Left lung (tissue), 14 donors: ENCODE measurements at regions of chr15 and their contacts with region 1.

Region 1: GRCh38 chr15:92808978-92809879 is 90.9 kb upstream of the CHD2 start:
- DNase-seq: peak; percentile 99 to 100 (median 99)
- ATAC-seq: peak; percentile 80
- H3K4me3 ChIP-seq: peak overlapping the region; percentile 42 to 59
- H3K27ac ChIP-seq: peak overlapping the region; percentile 99 to 100
- H3K4me1 ChIP-seq: peaks cover 13 to 64% of the 10 kb centered on the region in 2 donors
- H3K27me3 ChIP-seq: no peaks in the 10 kb centered on the region
- CTCF ChIP-seq: peak; percentile 97 to 100

Region 2: DNA sequence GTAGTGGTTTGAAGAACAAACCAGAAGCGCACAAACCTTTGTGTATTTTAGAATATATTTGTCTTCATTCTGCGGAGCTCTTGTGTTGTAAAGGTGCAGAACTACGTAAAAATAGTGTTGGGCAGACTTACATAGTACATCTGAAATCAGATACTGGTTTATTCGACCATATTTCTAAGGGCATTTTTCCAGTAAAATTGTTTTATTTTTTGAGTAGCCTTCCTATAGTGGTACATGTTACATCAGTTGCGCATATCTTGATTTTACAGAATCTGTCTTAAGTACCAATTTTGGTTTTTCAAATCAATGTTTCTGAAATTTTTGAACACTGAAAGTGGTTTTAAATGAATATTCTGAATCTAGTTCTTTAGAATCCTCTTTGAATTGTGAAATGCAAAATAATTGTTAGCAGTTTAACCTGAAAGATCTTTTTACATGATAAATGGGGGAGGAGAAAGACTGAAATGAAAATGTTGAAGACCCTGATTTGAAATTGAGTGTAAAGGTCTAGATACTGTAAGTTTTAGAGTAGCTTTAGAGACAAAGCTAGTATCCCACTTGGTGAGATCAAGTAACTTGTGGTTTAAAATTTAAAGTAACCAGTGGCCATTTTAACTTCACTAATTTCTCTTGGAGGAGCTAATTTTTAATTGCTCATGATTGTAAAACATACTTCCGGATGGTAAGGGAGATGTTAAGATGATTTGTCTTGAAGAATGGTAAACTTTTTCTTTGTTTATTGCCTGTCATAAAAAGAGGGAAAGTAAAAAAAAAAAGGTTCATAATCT is 75.4 kb after region 1 on chr15:
- intact Hi-C with region 1: loop called in 1 of 2 experiments (anchors 5 kb)
- DNase-seq: no peak
- ATAC-seq: no peak
- H3K4me3 ChIP-seq: peak overlapping the region; percentile 78 to 79
- H3K27ac ChIP-seq: peak overlapping the region; percentile 100
- H3K4me1 ChIP-seq: peaks cover 23 to 62% of the 10 kb centered on the region in 2 donors
- H3K27me3 ChIP-seq: no peaks in the 10 kb centered on the region
- CTCF ChIP-seq: no peak

Region 3: DNA sequence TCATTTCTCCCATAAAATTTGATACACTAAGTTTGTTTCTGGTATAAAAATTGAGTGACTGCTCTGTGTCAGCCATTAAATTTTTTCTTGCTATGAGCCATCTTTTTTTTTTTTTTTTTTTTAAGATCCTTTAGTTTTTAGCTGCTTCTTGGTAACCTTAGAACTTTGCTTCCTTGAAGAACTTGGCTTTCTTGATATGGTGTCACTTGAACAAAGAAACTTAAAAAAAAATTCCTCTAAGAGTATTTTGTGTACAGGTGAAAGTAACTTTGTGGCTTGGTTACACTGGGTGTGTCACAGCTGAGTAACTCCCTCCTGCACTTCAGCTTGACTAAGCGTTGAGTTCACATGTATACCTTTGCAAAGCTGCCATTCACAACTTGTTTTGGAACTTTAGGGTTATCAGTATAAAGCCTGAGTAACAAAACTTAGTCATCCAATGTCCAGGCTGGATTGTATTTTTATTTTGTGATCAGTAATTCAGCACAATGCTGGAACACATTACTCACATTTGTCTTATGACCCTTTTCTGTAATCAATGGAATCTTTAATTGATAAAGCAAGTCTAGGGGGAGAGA is 97.4 kb after region 1 on chr15:
- intact Hi-C with region 1: loop called in 1 of 2 experiments (anchors 5 kb)
- DNase-seq: no peak
- ATAC-seq: peak; percentile 30
- H3K4me3 ChIP-seq: peak overlapping the region in 1 of 2 donors; percentile 62
- H3K27ac ChIP-seq: peak overlapping the region; percentile 98 to 99
- H3K4me1 ChIP-seq: peaks cover 50 to 81% of the 10 kb centered on the region in 2 donors
- H3K27me3 ChIP-seq: no peaks in the 10 kb centered on the region
- CTCF ChIP-seq: no peak

Region 4: DNA sequence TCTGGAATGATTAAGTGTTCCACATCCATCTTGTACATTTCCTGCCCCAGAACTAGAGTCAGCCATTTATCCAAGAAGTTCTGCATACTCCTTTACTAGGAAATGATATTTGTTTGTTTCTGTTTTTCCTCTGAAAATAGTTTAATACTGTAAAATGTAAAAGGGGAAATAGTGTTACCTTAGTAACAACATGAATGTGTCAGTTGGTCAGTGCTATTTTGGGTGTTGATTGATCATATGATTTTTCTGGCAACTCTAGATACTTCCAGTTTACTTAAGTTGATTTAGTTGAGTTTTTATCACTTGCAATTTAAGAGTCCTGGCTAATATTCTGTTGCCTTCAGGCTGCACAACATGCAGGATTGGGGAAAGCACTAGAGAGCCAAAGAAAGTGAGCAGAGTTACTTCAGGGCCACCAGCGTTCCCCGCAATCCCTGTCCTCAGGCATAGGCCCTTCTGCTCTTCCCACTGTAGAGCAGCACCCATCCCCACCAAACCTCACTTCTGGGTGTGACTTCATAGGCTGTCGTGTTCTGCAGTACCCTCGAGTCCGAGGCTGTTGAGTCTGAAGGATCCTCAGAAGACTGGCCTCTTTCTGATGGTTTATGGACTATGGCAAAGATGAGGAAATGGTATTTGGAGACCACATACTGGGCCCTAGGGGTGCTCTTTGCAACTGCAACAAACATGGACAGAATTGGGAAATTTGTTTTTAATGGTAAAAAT is 159.9 kb after region 1 on chr15:
- intact Hi-C with region 1: no loop called
- DNase-seq: no peak
- ATAC-seq: peak; percentile 42
- H3K4me3 ChIP-seq: no peak overlapping the region
- H3K27ac ChIP-seq: peak overlapping the region; percentile 37 to 57
- H3K4me1 ChIP-seq: peaks cover 5 to 23% of the 10 kb centered on the region in 2 donors
- H3K27me3 ChIP-seq: no peaks in the 10 kb centered on the region
- CTCF ChIP-seq: no peak

Region 5: GRCh38 chr15:93495799-93496637 is 686.8 kb after region 1 on chr15:
- intact Hi-C with region 1: no loop called
- DNase-seq: no peak
- ATAC-seq: no peak
- H3K4me3 ChIP-seq: no peak overlapping the region
- H3K27ac ChIP-seq: no peak overlapping the region
- H3K4me1 ChIP-seq: no peaks in the 10 kb centered on the region
- H3K27me3 ChIP-seq: no peaks in the 10 kb centered on the region
- CTCF ChIP-seq: no peak